ENCODE measurements at regions of chr4 and their contacts with region 1.

Region 1: GRCh38 chr4:53908661-53909078 is 155.7 kb downstream of the CHIC2 start:
- DNase-seq: peak; percentile 83
- ATAC-seq: peak; percentile 90
- H3K4me3 ChIP-seq: peak overlapping the region in 1 of 3 experiments; percentile 15; a peak in 1 of 6 replicates
- H3K27ac ChIP-seq: no peak overlapping the region
- H3K4me1 ChIP-seq: peaks cover 41% of the 10 kb centered on the region
- H3K27me3 ChIP-seq: peaks cover 0 to 10% of the 10 kb centered on the region in 2 experiments; a peak in 3 of 5 replicates
- CTCF ChIP-seq: peak; percentile 87
- EP300 ChIP-seq: peak; percentile 19 to 59; a peak in 1 of 4 replicates
- POLR2A ChIP-seq: no peak
- RAD21 ChIP-seq: peak; percentile 84

Region 2: DNA sequence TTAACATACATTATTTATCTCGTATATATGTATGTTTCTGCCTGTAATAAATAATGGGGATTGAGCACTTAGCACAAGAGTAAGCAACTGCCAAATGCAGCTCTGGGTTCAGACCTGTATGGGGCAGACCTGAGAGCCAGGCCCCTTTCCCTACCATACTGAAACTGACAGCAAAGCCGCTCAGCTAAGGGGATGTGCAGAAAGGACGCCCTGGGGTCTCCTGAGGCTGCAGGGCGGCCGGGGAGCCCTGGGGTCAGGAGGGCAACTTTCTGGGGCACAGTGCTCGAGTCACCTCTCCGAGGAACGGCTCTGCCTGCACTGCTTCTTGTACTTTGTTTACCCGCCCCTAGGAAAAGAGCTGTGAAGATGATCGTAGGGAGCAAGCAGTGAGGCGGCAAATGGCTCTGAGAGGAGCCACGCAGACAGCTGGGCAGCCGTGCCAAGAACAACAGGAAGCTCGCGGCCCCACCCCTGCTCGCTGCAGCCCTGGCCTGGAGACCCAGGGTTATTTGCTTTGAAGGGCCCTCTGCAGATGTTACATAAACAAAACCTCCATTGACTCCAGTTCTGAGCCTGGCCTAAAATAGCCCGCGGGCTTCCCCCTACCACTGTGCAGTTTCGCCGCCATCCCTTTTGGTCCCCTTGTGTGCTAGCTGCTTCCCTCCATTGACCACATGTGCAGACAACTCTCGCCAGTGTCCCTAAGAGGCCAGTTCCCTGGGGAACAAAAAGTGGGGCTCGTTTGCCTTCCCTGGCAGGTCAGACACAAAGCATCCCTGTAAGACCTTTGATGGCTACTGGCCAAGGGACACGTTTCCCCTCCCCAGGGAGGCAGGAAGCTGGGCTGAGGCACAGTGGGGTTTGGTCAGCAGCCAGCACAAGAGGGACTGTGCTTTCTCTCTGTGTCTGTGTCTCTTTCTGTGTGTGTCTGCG is 206.1 kb before region 1 on chr4:
- CTCF ChIA-PET with region 1: no interaction called
- POLR2A ChIA-PET with region 1: no interaction called
- in situ Hi-C with region 1: no loop called
- intact Hi-C with region 1: loop called (anchors 10 kb)
- DNase-seq: peak; percentile 63
- ATAC-seq: peak; percentile 90
- H3K4me3 ChIP-seq: peak overlapping the region; percentile 50 to 68 (median 56)
- H3K27ac ChIP-seq: no peak overlapping the region
- H3K4me1 ChIP-seq: peaks cover 27% of the 10 kb centered on the region
- H3K27me3 ChIP-seq: no peaks in the 10 kb centered on the region
- CTCF ChIP-seq: no peak
- EP300 ChIP-seq: no peak
- POLR2A ChIP-seq: no peak
- RAD21 ChIP-seq: no peak

Region 3: DNA sequence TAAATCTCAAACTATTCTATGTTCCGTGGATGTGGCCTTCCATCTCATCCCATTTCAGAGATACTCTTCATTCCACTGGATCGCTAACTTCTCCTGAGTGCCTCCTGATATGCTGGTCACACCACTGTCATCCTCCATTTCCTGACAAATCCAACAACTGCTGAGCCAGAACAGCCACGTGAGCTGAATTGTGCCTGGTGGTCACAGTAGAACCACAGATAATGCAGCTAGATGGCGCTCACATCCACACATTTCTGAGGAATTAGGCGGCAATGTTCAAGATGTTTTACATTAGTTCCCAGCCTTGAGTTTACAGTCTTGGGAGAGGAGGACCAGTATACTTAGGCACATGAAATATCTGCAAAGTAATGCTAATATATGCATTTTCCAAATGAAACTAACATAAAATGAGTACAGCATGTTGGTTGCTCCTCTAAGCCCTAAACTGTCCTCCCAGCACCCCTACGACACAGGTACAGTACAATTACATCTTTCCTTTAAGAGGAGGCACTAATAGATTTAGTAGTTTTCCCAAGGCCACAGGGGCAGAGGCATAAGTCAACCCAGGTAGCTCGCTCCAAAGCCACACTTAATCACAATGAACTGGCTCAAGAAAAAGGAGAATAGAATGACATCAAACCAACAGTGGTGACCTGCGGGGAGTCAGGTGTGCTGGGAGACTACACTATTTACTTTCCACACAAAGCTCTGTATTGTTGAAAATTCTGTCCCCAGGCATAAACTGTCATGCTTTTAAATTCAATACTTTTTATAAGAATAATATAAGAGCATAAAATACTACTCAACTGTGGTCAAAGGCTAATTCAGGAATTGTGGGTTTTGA is 21.5 kb after region 1 on chr4:
- CTCF ChIA-PET with region 1: interaction called, 5 read pairs
- POLR2A ChIA-PET with region 1: no interaction called
- in situ Hi-C with region 1: no loop called
- intact Hi-C with region 1: loop called (anchors 1 kb)
- DNase-seq: peak; percentile 60
- ATAC-seq: peak; percentile 97
- H3K4me3 ChIP-seq: no peak overlapping the region
- H3K27ac ChIP-seq: no peak overlapping the region
- H3K4me1 ChIP-seq: peaks cover 14% of the 10 kb centered on the region
- H3K27me3 ChIP-seq: no peaks in the 10 kb centered on the region
- CTCF ChIP-seq: peak; percentile 92
- EP300 ChIP-seq: no peak
- POLR2A ChIP-seq: no peak
- RAD21 ChIP-seq: peak; percentile 56

Region 4: DNA sequence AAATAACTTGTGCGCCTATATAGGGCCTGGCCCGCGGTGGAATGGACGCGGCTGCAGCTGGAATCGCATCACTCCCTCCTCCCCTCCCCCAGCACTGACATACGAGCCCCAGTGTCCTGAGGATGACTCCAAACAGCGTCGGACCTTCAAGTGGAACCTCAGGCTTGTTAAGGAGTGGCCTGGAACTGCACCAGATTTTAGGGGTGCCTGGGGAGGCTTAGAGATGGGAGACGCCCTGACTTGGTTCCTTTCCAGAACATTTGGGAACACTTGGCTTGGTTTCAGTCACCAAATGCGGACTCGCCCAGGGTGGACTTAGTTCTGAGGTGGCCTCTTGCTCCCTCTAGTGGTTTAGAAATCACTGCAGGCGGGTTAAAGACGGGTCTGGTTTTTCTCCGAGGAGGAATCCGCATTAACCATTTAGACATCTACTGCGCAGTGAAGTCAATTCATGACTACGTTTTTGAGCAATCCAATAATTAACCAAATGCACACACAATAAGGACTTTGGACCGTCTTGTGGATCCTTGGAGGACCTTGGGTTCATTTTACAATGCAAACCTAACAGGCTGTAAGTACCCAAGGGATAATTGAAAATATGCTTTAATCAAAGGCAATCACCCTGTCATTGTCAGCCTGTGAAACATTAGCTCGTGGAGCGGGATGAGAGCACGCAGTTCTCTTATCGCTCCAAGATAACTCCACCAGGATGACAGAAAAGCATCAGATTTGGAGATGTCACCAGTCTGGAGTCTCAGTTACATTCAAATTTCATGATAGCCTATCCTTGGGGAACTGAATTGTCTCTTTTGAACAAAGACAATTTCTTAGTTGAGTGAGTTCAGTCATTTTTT is 309.2 kb after region 1 on chr4:
- CTCF ChIA-PET with region 1: interaction called, 24 read pairs
- POLR2A ChIA-PET with region 1: no interaction called
- in situ Hi-C with region 1: loop called (anchors 10 kb)
- intact Hi-C with region 1: loop called (anchors 1 kb)
- DNase-seq: peak; percentile 52
- ATAC-seq: peak; percentile 97
- H3K4me3 ChIP-seq: peak overlapping the region in 1 of 3 experiments; percentile 59; a peak in 2 of 6 replicates
- H3K27ac ChIP-seq: no peak overlapping the region
- H3K4me1 ChIP-seq: no peaks in the 10 kb centered on the region
- H3K27me3 ChIP-seq: peaks cover 0 to 5% of the 10 kb centered on the region in 2 experiments; a peak in 3 of 5 replicates
- CTCF ChIP-seq: peak; percentile 92
- EP300 ChIP-seq: no peak
- POLR2A ChIP-seq: no peak
- RAD21 ChIP-seq: peak; percentile 83

Region 5: DNA sequence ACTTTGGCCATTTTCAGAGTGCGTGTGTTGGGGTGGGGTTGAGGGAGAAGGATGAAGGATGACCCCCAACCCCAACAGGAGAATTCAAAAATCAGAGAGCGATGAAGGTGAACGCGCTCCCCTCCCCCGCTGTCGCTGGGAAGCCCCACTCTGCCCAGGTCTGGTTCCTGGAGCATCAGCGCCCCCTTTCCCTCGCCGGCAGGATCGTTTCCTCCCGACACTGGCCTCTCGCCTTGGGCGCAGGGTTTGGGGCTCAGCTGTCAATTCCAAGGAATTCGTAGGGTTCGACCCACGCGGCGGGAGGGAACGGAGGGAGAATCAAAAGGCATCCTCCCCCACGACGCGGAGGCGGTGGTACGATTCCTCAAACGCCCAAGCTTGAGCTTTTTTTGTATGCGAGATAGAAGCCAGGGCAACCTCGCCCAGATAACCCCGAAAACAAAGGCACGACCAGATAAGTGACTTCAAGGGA is 319.4 kb after region 1 on chr4:
- CTCF ChIA-PET with region 1: interaction called, 22 read pairs
- POLR2A ChIA-PET with region 1: no interaction called
- in situ Hi-C with region 1: loop called (anchors 10 kb)
- intact Hi-C with region 1: loop called (anchors 1 kb)
- DNase-seq: peak; percentile 5
- ATAC-seq: peak; percentile 55
- H3K4me3 ChIP-seq: peak overlapping the region in 1 of 3 experiments; percentile 48; a peak in 1 of 6 replicates
- H3K27ac ChIP-seq: no peak overlapping the region
- H3K4me1 ChIP-seq: peaks cover 33% of the 10 kb centered on the region
- H3K27me3 ChIP-seq: peaks cover 18 to 83% of the 10 kb centered on the region in 2 experiments
- CTCF ChIP-seq: peak; percentile 87
- EP300 ChIP-seq: no peak
- POLR2A ChIP-seq: no peak
- RAD21 ChIP-seq: peak; percentile 74

Region 6: DNA sequence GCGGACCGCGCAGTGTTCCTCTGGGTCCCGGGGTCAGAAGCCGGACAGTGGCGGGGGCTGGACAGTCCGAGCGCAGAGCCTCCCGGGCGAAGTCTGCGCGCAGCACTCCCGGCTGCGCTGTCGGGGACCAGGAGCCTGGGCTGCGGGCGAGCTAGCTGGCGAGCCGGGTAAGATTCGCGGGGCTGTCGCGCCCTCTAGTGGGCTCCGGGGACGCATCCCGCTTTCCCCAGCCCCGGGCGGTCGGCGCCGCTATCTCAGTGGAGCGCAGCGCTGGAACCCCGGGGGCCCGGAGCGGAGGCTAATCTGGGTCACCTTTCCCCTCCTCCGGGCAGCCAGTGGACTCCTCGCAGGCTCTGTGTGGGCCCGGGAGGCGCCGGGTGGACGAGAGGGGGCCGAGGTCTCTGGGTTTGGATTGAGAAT is 324.6 kb after region 1 on chr4:
- CTCF ChIA-PET with region 1: interaction called, 22 read pairs
- POLR2A ChIA-PET with region 1: no interaction called
- in situ Hi-C with region 1: loop called (anchors 10 kb)
- intact Hi-C with region 1: loop called (anchors 1 kb)
- DNase-seq: peak; percentile 55
- ATAC-seq: peak; percentile 94
- H3K4me3 ChIP-seq: peak overlapping the region; percentile 45 to 75 (median 52); a peak in 5 of 6 replicates
- H3K27ac ChIP-seq: no peak overlapping the region
- H3K4me1 ChIP-seq: peaks cover 30% of the 10 kb centered on the region; the same call in 1 of the 2 replicates
- H3K27me3 ChIP-seq: peaks cover 14 to 45% of the 10 kb centered on the region in 2 experiments
- CTCF ChIP-seq: peak; percentile 93
- EP300 ChIP-seq: no peak
- POLR2A ChIP-seq: no peak
- RAD21 ChIP-seq: peak; percentile 97